ENCODE measurements at regions of chr1 and their contacts with region 1.

Region 1: DNA sequence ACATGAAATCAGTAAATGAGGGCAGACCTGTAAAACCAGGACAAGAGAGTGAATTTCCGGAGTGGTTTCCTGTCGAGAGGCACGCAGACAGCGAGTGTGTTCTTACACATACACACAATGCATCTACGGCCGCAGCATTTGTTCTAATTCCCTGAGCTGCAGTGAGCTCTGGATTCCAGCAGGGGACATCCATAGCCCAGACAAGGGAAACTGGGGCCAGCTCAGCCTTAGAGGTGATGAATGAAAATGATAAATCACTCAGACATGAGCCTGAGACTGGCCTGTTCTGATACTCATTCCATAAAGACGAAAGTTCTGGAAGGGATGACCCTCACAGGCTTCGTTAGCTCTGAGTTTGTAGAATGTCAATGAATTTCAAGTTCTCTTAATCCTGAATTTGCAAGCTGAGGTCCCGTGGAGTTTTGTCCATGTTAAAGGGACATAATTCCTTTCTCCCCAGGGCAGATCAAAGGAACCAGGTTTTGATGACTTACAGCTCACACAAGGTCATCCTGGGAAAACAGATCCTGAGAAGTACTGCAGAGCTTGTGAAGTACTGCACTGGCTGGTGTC is 207.9 kb upstream of the C1orf87 start:
- DNase-seq: peak; percentile 83
- ATAC-seq: peak; percentile 96
- H3K4me3 ChIP-seq: peak overlapping the region in 1 of 2 experiments; percentile 19; a peak in 1 of 4 replicates
- H3K27ac ChIP-seq: no peak overlapping the region
- H3K4me1 ChIP-seq: peaks cover 5 to 24% of the 10 kb centered on the region in 2 experiments; a peak in 3 of 4 replicates
- H3K27me3 ChIP-seq: no peaks in the 10 kb centered on the region
- CTCF ChIP-seq: peak; percentile 82 to 95 (median 94)
- POLR2A ChIP-seq: no peak
- RAD21 ChIP-seq: peak; percentile 98

Region 2: DNA sequence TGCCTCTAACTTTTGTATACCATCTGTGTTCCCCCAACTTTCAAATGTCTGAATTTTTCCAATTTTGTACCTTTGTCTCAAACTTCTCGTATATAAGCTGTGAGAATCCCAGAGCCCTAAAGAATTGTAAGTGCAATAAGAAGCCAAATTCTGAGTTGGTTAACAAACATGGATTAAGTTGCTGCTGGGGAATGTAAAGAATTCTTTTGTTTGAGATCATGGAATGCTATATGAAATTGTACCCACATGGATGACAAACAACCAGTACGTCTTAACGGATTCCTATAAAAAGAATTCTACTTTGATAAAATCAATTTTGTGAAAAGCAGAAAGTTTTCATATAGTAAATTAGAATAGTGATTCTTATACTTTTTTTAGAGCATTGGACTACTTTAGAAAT is 282.4 kb before region 1 on chr1:
- CTCF ChIA-PET with region 1: no interaction called
- POLR2A ChIA-PET with region 1: no interaction called
- RAD21 ChIA-PET with region 1: no interaction called
- intact Hi-C with region 1: no loop called
- DNase-seq: no peak
- ATAC-seq: no peak
- H3K4me3 ChIP-seq: no peak overlapping the region
- H3K27ac ChIP-seq: no peak overlapping the region
- H3K4me1 ChIP-seq: no peaks in the 10 kb centered on the region
- H3K27me3 ChIP-seq: peaks cover 11% of the 10 kb centered on the region; the same call in 1 of the 2 replicates
- CTCF ChIP-seq: no peak
- POLR2A ChIP-seq: no peak
- RAD21 ChIP-seq: no peak

Region 3: GRCh38 chr1:60425528-60425927 is 144.1 kb after region 1 on chr1:
- CTCF ChIA-PET with region 1: interaction called, 11 read pairs
- POLR2A ChIA-PET with region 1: no interaction called
- RAD21 ChIA-PET with region 1: no interaction called
- intact Hi-C with region 1: no loop called
- DNase-seq: peak; percentile 10
- ATAC-seq: peak; percentile 87
- H3K4me3 ChIP-seq: no peak overlapping the region
- H3K27ac ChIP-seq: no peak overlapping the region
- H3K4me1 ChIP-seq: no peaks in the 10 kb centered on the region
- H3K27me3 ChIP-seq: peaks cover 4% of the 10 kb centered on the region; the same call in 1 of the 2 replicates
- CTCF ChIP-seq: peak; percentile 10 to 61 (median 57); a peak in 5 of 6 replicates
- POLR2A ChIP-seq: no peak
- RAD21 ChIP-seq: peak; percentile 51

Region 4: DNA sequence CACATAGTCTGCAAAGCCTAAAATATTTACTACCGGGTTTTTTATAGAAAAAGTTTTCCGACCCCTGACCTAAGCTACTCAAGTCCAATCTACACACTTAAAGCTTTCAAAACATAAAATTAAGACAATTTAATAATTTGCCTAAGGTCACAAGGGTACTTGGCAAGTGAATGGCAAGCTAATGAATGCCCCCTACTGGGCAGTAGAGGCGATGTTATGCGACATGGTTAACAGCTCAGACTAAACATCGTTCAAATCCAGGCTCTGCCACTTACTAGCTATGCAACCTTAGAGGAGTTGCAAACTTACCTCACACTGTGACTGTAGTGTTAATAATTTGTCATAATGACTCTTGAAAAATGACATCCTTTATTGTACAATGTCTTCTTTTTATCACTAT is 483.8 kb after region 1 on chr1:
- CTCF ChIA-PET with region 1: interaction called, 58 read pairs
- POLR2A ChIA-PET with region 1: interaction called, 5 read pairs
- RAD21 ChIA-PET with region 1: interaction called, 12 to 15 read pairs
- intact Hi-C with region 1: loop called (anchors 1 kb)
- DNase-seq: peak; percentile 50
- ATAC-seq: peak; percentile 92
- H3K4me3 ChIP-seq: no peak overlapping the region
- H3K27ac ChIP-seq: no peak overlapping the region
- H3K4me1 ChIP-seq: no peaks in the 10 kb centered on the region
- H3K27me3 ChIP-seq: peaks cover 16% of the 10 kb centered on the region
- CTCF ChIP-seq: peak; percentile 55 to 77 (median 67); a peak in 5 of 6 replicates
- POLR2A ChIP-seq: no peak
- RAD21 ChIP-seq: peak; percentile 81

Region 5: DNA sequence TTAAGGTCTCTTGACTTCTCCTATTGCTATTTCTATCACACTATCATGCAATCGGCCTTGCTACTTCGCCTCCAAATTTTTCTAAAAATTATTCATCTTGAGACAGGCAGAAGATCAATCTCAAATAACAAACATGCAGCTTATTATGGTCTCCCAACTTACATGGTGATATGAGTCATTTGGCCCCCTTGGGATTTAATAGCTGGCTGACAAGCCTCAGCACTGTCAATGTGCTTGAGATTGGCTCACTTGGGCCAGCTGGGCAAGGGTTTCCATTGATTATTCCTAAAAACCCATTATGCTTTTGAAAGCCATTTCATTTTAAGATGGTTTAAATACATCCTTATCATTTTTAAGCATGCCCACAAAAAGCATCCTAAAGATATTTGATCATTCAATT is 576.4 kb after region 1 on chr1:
- CTCF ChIA-PET with region 1: interaction called, 3 read pairs
- POLR2A ChIA-PET with region 1: no interaction called
- RAD21 ChIA-PET with region 1: no interaction called
- intact Hi-C with region 1: loop called (anchors 10 kb)
- DNase-seq: no peak
- ATAC-seq: no peak
- H3K4me3 ChIP-seq: no peak overlapping the region
- H3K27ac ChIP-seq: no peak overlapping the region
- H3K4me1 ChIP-seq: no peaks in the 10 kb centered on the region
- H3K27me3 ChIP-seq: peaks cover 10% of the 10 kb centered on the region; the same call in 1 of the 2 replicates
- CTCF ChIP-seq: no peak
- POLR2A ChIP-seq: no peak
- RAD21 ChIP-seq: no peak

Measured in HCT116 (cell line).